ENCODE measurements at regions of chr1 and their contacts with region 1.

Region 1: GRCh38 chr1:25760122-25760719 is 39.8 kb upstream of the SELENON start:
- DNase-seq: no peak
- H3K4me3 ChIP-seq: no peak overlapping the region
- H3K27ac ChIP-seq: no peak overlapping the region
- H3K4me1 ChIP-seq: no peaks in the 10 kb centered on the region
- H3K27me3 ChIP-seq: no peaks in the 10 kb centered on the region
- CTCF ChIP-seq: no peak
- POLR2A ChIP-seq: no peak

Region 2: DNA sequence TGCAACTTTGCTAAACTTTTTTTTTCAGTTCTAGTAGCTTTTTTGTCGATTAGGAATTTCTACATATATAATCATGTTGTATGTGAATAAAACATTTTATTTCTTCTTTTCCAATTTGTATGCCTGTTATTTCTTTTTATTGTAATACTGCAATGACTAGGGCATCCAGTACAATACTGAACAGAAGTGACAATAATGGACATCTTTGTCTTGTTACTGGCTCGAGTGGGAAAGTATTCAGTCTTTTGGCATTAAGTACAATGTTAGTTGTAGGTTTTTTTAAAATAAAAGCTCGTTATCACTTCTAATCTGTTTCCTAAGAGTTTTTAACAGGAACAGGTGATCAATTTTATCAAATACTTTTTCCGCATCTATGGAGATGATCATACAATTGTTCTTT is 1356.4 kb before region 1 on chr1:
- intact Hi-C with region 1: loop called (anchors 5 kb)
- DNase-seq: no peak
- H3K4me3 ChIP-seq: no peak overlapping the region
- H3K27ac ChIP-seq: no peak overlapping the region
- H3K4me1 ChIP-seq: no peaks in the 10 kb centered on the region
- H3K27me3 ChIP-seq: no peaks in the 10 kb centered on the region
- CTCF ChIP-seq: no peak
- POLR2A ChIP-seq: no peak

Region 3: DNA sequence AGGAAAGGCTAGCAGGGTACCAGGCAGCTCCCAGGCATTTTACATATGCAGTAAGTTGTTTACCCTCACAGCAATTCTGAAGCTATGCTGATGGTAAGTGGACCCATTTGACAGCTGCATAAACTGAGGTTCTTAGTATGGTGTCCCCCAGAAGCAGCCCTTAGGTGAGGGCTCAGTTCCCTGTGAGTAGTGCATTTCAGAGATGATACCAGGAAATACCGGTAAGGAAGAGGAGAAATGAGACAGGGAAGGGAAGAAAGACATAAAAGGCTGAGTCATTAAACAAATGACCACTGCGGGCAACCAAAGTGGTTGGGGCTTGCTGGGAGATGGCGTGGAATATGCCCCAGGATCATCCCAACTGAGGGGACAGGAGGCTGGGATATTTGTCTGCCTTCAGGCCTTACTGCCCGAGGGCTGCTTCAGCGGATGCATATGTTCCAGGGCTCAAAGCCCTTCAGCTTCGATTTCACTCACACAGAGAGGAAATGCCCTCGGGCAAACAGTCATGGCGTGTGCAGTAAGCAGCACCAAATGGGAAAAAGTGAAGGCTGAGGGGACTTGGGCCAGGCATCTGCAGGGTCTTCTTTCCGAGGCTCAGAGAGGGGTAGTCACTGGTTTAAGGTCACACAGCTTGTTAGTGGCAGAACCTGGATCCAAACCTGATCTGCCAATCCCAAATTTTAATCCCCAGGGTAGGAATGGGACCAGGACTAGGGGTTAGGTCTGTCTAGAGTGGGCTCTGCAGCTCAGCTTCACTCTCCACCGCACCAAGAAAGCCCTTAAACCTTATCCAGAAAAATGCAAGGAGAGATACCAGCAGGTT is 696.4 kb before region 1 on chr1:
- intact Hi-C with region 1: no loop called
- DNase-seq: no peak
- H3K4me3 ChIP-seq: no peak overlapping the region
- H3K27ac ChIP-seq: no peak overlapping the region
- H3K4me1 ChIP-seq: peaks cover 5 to 15% of the 10 kb centered on the region in 2 donors
- H3K27me3 ChIP-seq: no peaks in the 10 kb centered on the region
- CTCF ChIP-seq: no peak
- POLR2A ChIP-seq: no peak

Region 4: DNA sequence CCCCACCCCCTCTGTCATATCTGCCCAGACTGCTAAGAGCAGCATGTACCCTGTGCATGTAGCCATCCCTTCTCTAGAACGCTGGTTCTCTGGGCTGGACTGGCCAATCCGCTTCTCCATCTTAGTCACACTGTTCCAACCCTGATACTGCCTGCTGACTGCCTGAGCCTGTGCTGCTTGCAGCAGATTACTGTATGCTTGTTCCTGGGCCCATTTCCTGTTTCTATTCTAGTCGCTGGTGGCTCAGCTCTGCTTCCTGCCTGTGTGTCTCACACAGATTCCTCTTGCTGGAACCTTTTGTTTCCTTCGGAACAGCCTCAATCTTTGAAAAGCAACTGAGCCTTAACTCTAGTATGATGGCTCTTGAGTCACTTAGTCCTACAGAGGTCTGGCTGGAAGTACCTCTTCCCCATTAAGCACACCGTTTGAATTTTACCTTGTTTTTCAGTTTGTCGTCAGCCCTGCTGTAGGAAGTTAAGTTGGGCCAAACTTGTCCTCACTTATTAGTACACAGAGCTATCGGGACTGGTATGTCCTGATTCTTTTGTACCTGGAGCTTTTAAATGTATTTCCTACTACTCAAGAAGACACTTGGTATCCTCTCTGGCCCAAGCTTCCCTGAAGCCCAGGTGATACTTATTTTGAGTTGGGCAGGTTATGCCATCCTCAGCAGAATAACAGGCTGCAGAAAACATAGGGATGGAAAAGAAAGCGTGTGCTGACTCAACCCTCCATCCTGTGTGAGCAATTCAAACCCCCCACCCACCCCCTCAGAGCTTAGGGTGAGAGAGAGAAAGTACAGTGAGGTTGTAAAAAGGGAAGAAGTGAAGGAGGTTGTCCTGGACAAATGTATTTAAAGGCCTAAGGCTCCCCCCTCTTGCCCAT is 984.1 kb after region 1 on chr1:
- intact Hi-C with region 1: no loop called
- DNase-seq: peak in 1 of 2 donors; percentile 60
- H3K4me3 ChIP-seq: no peak overlapping the region
- H3K27ac ChIP-seq: peak overlapping the region; percentile 57 to 63
- H3K4me1 ChIP-seq: peaks cover 0 to 4% of the 10 kb centered on the region in 2 donors
- H3K27me3 ChIP-seq: no peaks in the 10 kb centered on the region
- CTCF ChIP-seq: no peak
- POLR2A ChIP-seq: no peak